Upper lobe of right lung (tissue), 1 donor: ENCODE measurements at regions of chr12 and their contacts with region 1.

Region 1: GRCh38 chr12:76020731-76021672 is 10.6 kb downstream of the PHLDA1 start:
- DNase-seq: no peak
- ATAC-seq: peak; percentile 58
- H3K4me3 ChIP-seq: no peak overlapping the region
- H3K27ac ChIP-seq: peak overlapping the region; percentile 48
- H3K4me1 ChIP-seq: peaks cover 36% of the 10 kb centered on the region
- H3K27me3 ChIP-seq: no peaks in the 10 kb centered on the region
- CTCF ChIP-seq: no peak

Region 2: GRCh38 chr12:75820848-75821578 is 200.0 kb before region 1 on chr12:
- intact Hi-C with region 1: loop called (anchors 10 kb)
- DNase-seq: no peak
- ATAC-seq: no peak
- H3K4me3 ChIP-seq: no peak overlapping the region
- H3K27ac ChIP-seq: no peak overlapping the region
- H3K4me1 ChIP-seq: no peaks in the 10 kb centered on the region
- H3K27me3 ChIP-seq: no peaks in the 10 kb centered on the region
- CTCF ChIP-seq: no peak

Region 3: GRCh38 chr12:76094754-76095153 is 73.8 kb after region 1 on chr12:
- intact Hi-C with region 1: no loop called
- DNase-seq: no peak
- ATAC-seq: no peak
- H3K4me3 ChIP-seq: no peak overlapping the region
- H3K27ac ChIP-seq: no peak overlapping the region
- H3K4me1 ChIP-seq: no peaks in the 10 kb centered on the region
- H3K27me3 ChIP-seq: no peaks in the 10 kb centered on the region
- CTCF ChIP-seq: no peak

Region 4: DNA sequence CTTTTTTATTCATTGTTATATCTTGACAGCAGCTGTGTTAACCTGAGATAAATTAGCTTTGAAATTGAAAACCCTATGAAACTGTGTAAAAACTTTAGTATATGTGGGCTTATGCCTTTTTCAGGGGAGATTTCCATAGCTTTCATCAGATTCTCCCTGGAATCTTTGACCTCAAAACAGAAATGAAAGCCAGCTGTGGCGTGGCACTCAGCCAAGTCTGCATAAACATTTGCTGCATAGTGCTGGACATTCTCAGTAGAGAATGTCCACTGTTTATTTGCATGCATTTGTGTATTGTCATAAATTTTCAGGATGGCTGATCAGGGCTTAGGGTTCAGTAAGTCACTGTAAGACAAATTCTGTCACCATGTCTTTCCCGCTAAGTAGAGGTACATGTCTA is 178.8 kb after region 1 on chr12:
- intact Hi-C with region 1: no loop called
- DNase-seq: no peak
- ATAC-seq: no peak
- H3K4me3 ChIP-seq: no peak overlapping the region
- H3K27ac ChIP-seq: no peak overlapping the region
- H3K4me1 ChIP-seq: no peaks in the 10 kb centered on the region
- H3K27me3 ChIP-seq: no peaks in the 10 kb centered on the region
- CTCF ChIP-seq: no peak

Region 5: GRCh38 chr12:76329163-76329562 is 308.2 kb after region 1 on chr12:
- intact Hi-C with region 1: no loop called
- DNase-seq: no peak
- ATAC-seq: no peak
- H3K4me3 ChIP-seq: no peak overlapping the region
- H3K27ac ChIP-seq: no peak overlapping the region
- H3K4me1 ChIP-seq: no peaks in the 10 kb centered on the region
- H3K27me3 ChIP-seq: no peaks in the 10 kb centered on the region
- CTCF ChIP-seq: no peak